PC-3 (cell line): ENCODE measurements at regions of chr9 and their contacts with region 1.

Region 1: DNA sequence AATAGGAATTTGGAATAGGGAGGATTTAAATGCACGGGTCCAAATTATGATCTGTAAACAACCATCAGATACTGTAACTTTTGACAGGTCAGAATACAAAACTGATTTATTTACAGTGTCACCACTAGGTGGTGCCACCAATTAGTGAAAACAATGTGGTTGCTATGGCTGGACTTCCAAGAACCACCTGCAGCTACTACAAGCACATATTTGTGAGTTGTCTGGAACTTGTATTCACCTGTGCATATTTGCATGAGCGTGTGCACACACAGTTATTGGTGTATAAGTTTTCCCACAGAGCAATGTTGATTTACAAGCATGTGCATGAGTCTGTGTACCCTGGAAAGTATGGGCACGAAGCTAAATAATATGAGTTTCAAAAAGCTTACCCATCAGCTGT is 3.0 kb upstream of the HRCT1 start:
- DNase-seq: peak; percentile 68
- ATAC-seq: no peak
- H3K4me3 ChIP-seq: no peak overlapping the region
- H3K27ac ChIP-seq: no peak overlapping the region
- H3K4me1 ChIP-seq: peaks cover 43% of the 10 kb centered on the region
- H3K27me3 ChIP-seq: no peaks in the 10 kb centered on the region
- CTCF ChIP-seq: peak; percentile 78

Region 2: DNA sequence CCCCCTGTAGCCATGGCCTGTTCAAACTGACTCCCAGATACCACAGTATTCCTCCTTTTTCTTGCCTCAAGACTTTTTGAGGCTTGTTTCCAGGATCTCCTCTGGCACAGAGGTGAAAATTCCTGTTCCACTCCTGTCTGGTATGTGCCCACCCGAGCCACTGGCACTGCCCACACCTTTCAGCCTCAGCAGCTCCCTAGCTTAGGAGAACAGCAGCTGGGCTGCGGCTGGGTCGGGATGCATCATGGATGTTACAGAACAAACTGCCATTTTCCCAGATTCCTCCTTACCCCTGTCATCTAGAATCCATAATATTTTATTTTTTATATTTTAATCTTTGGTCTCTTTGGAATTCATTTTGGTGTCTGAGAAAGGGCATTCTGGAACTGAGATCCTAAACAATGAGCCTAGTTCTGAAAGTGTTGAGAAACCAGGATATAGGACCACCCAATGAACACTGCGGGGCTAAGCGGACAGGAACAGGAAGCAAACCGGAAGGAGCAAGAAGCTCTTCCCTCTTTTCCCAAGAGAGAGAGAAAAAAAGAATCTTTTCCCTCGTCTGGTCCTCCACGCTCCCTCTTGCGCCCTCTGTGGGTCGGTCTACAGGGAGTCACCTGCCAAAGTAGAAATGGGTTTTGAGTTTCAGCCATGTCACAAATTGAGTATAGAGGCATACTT is 42.4 kb after region 1 on chr9:
- CTCF ChIA-PET with region 1: interaction called, 18 read pairs
- POLR2A ChIA-PET with region 1: no interaction called
- intact Hi-C with region 1: loop called (anchors 1 kb)
- DNase-seq: peak; percentile 84
- ATAC-seq: peak; percentile 57
- H3K4me3 ChIP-seq: no peak overlapping the region
- H3K27ac ChIP-seq: no peak overlapping the region
- H3K4me1 ChIP-seq: peaks cover 8% of the 10 kb centered on the region
- H3K27me3 ChIP-seq: no peaks in the 10 kb centered on the region
- CTCF ChIP-seq: peak; percentile 83

Region 3: DNA sequence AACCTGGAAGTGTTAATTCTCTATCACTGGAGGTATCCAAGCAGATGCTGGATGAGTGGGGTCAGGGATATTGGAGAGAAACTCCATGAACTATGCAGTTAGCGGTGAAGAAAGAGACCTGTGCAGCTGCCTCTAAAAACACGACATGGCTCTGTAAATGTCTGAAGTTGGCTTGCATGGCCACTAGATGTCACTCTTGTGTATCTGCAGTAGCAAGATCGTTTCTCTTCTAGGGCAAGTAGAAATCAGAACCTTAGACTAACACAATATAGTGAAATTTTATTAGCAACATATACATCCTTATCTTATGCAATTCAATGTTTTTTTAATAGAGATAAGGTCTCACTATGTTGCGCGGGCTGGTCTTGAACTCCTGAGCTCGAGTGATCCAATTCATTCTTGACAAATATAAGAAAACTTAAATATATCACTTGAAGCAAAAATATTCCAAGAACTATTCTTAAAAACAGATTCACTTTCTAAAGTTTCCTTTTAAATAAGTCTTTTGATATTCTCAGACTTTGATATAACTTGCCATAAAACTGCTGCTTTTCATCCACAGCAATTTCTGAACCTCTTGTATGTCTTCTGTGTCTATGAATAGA is 52.0 kb after region 1 on chr9:
- CTCF ChIA-PET with region 1: no interaction called
- POLR2A ChIA-PET with region 1: no interaction called
- intact Hi-C with region 1: loop called (anchors 2 kb)
- DNase-seq: peak; percentile 79
- ATAC-seq: peak; percentile 93
- H3K4me3 ChIP-seq: peak overlapping the region; percentile 57
- H3K27ac ChIP-seq: no peak overlapping the region
- H3K4me1 ChIP-seq: peaks cover 9% of the 10 kb centered on the region
- H3K27me3 ChIP-seq: no peaks in the 10 kb centered on the region
- CTCF ChIP-seq: peak; percentile 78

Region 4: GRCh38 chr9:35984021-35984420 is 81.0 kb after region 1 on chr9:
- CTCF ChIA-PET with region 1: no interaction called
- POLR2A ChIA-PET with region 1: no interaction called
- intact Hi-C with region 1: no loop called
- DNase-seq: no peak
- ATAC-seq: no peak
- H3K4me3 ChIP-seq: no peak overlapping the region
- H3K27ac ChIP-seq: no peak overlapping the region
- H3K4me1 ChIP-seq: no peaks in the 10 kb centered on the region
- H3K27me3 ChIP-seq: peaks cover 9% of the 10 kb centered on the region; the same call in 1 of the 2 replicates
- CTCF ChIP-seq: no peak

Region 5: DNA sequence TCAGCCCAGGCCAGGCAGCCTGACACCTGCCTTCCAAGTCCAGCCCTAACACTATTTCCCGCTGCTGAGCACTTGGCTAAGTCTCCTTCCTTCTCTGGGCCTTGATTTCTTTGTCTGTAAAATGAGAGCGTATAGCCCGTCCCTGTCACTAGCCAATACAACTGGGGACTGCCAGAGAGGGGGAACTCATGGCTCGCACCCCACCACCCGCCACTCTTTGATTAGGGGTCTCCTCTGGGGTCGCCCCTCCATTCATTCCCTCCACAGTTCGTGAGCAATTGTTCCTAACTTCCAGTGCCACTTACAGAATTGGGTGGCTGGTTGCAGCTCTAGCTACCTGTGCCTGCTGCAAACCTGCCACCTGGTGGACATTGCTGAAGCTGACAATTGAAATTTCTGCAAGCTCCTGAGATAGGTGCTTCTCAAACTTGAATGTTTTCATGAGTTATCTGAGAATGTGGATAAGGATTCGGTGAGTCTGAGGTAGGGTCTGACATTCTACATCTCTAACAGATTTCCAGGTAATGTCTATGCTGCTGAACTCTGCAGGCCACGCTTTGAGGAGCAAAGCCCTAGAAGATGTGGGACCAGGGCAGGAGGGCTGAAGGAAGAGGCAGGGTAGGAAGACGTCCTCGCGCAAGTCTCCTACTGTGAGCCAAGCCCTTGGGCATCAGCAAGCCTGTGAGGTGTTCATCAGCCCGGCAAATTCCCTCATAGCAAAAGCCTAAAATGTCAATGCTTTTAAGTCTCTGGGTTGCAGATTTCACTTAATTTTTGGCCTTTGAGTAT is 120.4 kb after region 1 on chr9:
- CTCF ChIA-PET with region 1: no interaction called
- POLR2A ChIA-PET with region 1: no interaction called
- intact Hi-C with region 1: loop called (anchors 5 kb)
- DNase-seq: peak; percentile 75
- ATAC-seq: peak; percentile 78
- H3K4me3 ChIP-seq: no peak overlapping the region
- H3K27ac ChIP-seq: no peak overlapping the region
- H3K4me1 ChIP-seq: no peaks in the 10 kb centered on the region
- H3K27me3 ChIP-seq: no peaks in the 10 kb centered on the region
- CTCF ChIP-seq: peak; percentile 82

Region 6: GRCh38 chr9:36597412-36598178 is 694.5 kb after region 1 on chr9:
- CTCF ChIA-PET with region 1: no interaction called
- POLR2A ChIA-PET with region 1: no interaction called
- intact Hi-C with region 1: no loop called
- DNase-seq: peak; percentile 47
- ATAC-seq: peak; percentile 78
- H3K4me3 ChIP-seq: no peak overlapping the region
- H3K27ac ChIP-seq: no peak overlapping the region
- H3K4me1 ChIP-seq: no peaks in the 10 kb centered on the region
- H3K27me3 ChIP-seq: no peaks in the 10 kb centered on the region
- CTCF ChIP-seq: peak; percentile 59